ENCODE measurements at regions of chr2 and their contacts with region 1.

Region 1: GRCh38 chr2:46296840-46297545 is at the start of gene EPAS1:
- DNase-seq: peak; percentile 86
- ATAC-seq: peak; percentile 87
- H3K4me3 Mint-ChIP-seq: peak within 1 kb of the TSS; percentile 79
- H3K27ac Mint-ChIP-seq: peak within 1 kb of the TSS; percentile 47
- H3K4me1 Mint-ChIP-seq: peaks cover 16% of the 10 kb centered on the region
- H3K27me3 Mint-ChIP-seq: peaks cover 45% of the 10 kb centered on the region
- total RNA-seq, gene EPAS1: 12.6 to 16.0 TPM

Region 2: GRCh38 chr2:45993476-45993991 is 303.5 kb before region 1 on chr2:
- CTCF ChIA-PET with region 1: no interaction called
- POLR2A ChIA-PET with region 1: no interaction called
- intact Hi-C with region 1: loop called in 1 of 2 experiments (anchors 5 kb)
- DNase-seq: peak; percentile 76
- ATAC-seq: peak; percentile 85
- H3K4me3 Mint-ChIP-seq: no peak overlapping the region
- H3K27ac Mint-ChIP-seq: no peak overlapping the region
- H3K4me1 Mint-ChIP-seq: peaks cover 8% of the 10 kb centered on the region
- H3K27me3 Mint-ChIP-seq: no peaks in the 10 kb centered on the region

Region 3: GRCh38 chr2:46062637-46063412 is 234.2 kb before region 1 on chr2:
- CTCF ChIA-PET with region 1: interaction called, 6 read pairs
- POLR2A ChIA-PET with region 1: no interaction called
- intact Hi-C with region 1: loop called (anchors 1 to 5 kb)
- DNase-seq: peak; percentile 85
- ATAC-seq: peak; percentile 52
- H3K4me3 Mint-ChIP-seq: no peak overlapping the region
- H3K27ac Mint-ChIP-seq: no peak overlapping the region
- H3K4me1 Mint-ChIP-seq: peaks cover 17% of the 10 kb centered on the region
- H3K27me3 Mint-ChIP-seq: no peaks in the 10 kb centered on the region

Region 4: GRCh38 chr2:46117379-46117778 is 179.6 kb before region 1 on chr2:
- CTCF ChIA-PET with region 1: no interaction called
- POLR2A ChIA-PET with region 1: no interaction called
- intact Hi-C with region 1: no loop called
- DNase-seq: no peak
- ATAC-seq: no peak
- H3K4me3 Mint-ChIP-seq: no peak overlapping the region
- H3K27ac Mint-ChIP-seq: no peak overlapping the region
- H3K4me1 Mint-ChIP-seq: no peaks in the 10 kb centered on the region
- H3K27me3 Mint-ChIP-seq: no peaks in the 10 kb centered on the region

Region 5: GRCh38 chr2:46187112-46187618 is 109.8 kb before region 1 on chr2:
- CTCF ChIA-PET with region 1: no interaction called
- POLR2A ChIA-PET with region 1: no interaction called
- intact Hi-C with region 1: loop called in 1 of 2 experiments (anchors 2 kb)
- DNase-seq: peak; percentile 65
- ATAC-seq: peak; percentile 99
- H3K4me3 Mint-ChIP-seq: no peak overlapping the region
- H3K27ac Mint-ChIP-seq: peak overlapping the region; percentile 85
- H3K4me1 Mint-ChIP-seq: peaks cover 13% of the 10 kb centered on the region
- H3K27me3 Mint-ChIP-seq: no peaks in the 10 kb centered on the region

Region 6: DNA sequence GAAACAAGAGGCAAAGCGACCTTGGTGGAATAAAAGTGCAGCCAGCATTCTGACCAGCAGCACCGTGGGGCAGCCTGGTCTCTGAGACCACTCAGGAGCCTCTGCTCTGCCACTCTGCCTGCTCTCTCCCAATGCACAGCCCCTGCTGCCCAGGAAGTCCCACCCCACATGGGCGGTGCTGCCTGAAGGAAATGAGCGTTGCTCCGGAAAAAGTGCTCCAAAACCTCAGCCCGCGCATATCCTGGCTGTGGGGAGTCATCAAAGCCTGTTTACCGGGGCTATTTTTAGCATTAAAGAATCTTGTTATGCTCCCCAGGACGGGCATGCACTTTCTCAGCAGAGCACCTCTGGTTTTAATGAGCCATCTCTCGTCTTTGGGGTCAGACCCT is 54.8 kb after region 1 on chr2:
- CTCF ChIA-PET with region 1: interaction called, 3 read pairs
- POLR2A ChIA-PET with region 1: no interaction called
- intact Hi-C with region 1: loop called in 1 of 2 experiments (anchors 5 kb)
- DNase-seq: peak; percentile 84
- ATAC-seq: peak; percentile 93
- H3K4me3 Mint-ChIP-seq: peak overlapping the region; percentile 74
- H3K27ac Mint-ChIP-seq: peak overlapping the region; percentile 91
- H3K4me1 Mint-ChIP-seq: peaks cover 76% of the 10 kb centered on the region
- H3K27me3 Mint-ChIP-seq: no peaks in the 10 kb centered on the region

Region 7: GRCh38 chr2:46490521-46491141 is 193.6 kb after region 1 on chr2:
- CTCF ChIA-PET with region 1: no interaction called
- POLR2A ChIA-PET with region 1: no interaction called
- intact Hi-C with region 1: no loop called
- DNase-seq: peak; percentile 12
- ATAC-seq: no peak
- H3K4me3 Mint-ChIP-seq: no peak overlapping the region
- H3K27ac Mint-ChIP-seq: no peak overlapping the region
- H3K4me1 Mint-ChIP-seq: peaks cover 10% of the 10 kb centered on the region
- H3K27me3 Mint-ChIP-seq: no peaks in the 10 kb centered on the region

Region 8: DNA sequence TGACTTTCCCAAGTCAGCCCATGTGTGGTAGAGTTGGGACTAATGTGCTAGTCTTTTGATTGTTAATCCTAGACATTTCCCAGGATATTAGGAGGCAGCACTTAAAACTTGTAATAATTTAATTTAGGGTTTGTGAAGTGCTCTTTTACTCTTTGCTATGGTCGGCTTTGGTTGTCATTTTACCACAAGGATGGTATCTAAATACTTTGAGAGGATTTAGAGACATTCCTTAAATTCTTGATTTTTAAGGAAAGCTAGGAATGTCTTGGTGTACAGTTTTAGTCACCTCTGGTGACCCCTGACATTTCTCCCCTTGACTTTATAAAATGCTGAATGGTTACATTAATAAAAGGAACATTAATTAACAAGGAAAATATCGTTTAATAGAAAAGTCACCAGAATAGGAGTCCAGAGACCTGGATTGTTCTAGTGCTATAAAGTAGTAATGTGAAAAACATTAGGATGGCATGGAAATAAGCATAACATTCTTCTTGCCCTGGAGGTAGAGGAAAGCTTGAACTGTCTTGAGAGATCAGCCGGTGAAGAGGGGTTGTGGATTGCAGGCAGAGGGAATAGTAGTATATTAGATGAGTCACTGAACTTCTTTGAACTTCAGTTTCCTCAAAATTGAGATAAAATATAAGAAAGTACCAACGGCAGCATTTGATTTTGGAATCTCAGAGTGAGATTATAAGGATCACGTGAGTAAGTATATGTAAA is 409.4 kb after region 1 on chr2:
- CTCF ChIA-PET with region 1: no interaction called
- POLR2A ChIA-PET with region 1: no interaction called
- intact Hi-C with region 1: no loop called
- DNase-seq: no peak
- ATAC-seq: no peak
- H3K4me3 Mint-ChIP-seq: no peak overlapping the region
- H3K27ac Mint-ChIP-seq: no peak overlapping the region
- H3K4me1 Mint-ChIP-seq: peaks cover 39% of the 10 kb centered on the region
- H3K27me3 Mint-ChIP-seq: no peaks in the 10 kb centered on the region

Measured in activated CD4-positive, alpha-beta T cell treated with anti-CD3 and anti-CD28 coated beads for 36 hours (primary cell).